PC-3 (cell line): ENCODE measurements at regions of chr9 and their contacts with region 1.

Region 1: GRCh38 chr9:22079873-22080341 is 70.8 kb upstream of the CDKN2B start:
- DNase-seq: no peak
- ATAC-seq: no peak
- H3K4me3 ChIP-seq: no peak overlapping the region
- H3K27ac ChIP-seq: no peak overlapping the region
- H3K4me1 ChIP-seq: peaks cover 14% of the 10 kb centered on the region
- H3K27me3 ChIP-seq: no peaks in the 10 kb centered on the region
- CTCF ChIP-seq: no peak

Region 2: DNA sequence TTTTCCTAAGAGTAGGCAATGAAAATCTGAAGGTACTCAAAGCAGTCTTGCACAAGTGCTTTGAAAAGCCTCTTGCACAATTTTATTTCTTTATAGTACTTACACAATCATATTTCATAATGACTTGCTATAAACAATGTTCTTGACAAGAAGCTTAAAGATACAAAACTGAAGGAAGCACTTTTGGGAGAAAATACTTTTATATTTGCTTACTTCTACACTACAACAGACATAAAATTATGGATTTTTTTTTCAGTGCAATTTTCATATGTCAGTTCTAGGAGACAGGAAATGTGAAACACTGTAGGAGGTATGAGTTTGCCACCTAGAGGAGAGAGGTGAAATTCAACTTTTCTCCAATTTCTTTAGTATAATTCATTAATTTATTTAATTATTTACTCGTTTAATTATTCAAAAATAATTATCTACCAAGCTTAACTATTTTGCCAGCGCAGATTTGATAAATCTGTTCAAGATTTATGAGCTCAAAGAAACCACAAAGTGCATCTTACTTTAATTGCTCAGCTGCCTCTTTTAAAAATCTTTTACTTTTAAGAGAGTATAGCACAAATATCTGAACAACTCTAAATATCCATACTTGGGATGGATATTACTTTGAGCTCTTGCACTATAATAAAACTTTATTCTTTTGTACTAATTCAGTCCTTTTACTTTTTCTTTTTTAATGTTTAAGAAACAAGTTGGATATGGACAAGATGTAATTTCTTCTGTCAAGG is 41.8 kb before region 1 on chr9:
- CTCF ChIA-PET with region 1: no interaction called
- POLR2A ChIA-PET with region 1: no interaction called
- intact Hi-C with region 1: loop called (anchors 5 kb)
- DNase-seq: peak; percentile 48
- ATAC-seq: no peak; the same call in 1 of the 2 replicates
- H3K4me3 ChIP-seq: no peak overlapping the region
- H3K27ac ChIP-seq: no peak overlapping the region
- H3K4me1 ChIP-seq: peaks cover 62% of the 10 kb centered on the region
- H3K27me3 ChIP-seq: no peaks in the 10 kb centered on the region
- CTCF ChIP-seq: peak; percentile 44